ENCODE measurements at regions of chr5 and their contacts with region 1.

Region 1: DNA sequence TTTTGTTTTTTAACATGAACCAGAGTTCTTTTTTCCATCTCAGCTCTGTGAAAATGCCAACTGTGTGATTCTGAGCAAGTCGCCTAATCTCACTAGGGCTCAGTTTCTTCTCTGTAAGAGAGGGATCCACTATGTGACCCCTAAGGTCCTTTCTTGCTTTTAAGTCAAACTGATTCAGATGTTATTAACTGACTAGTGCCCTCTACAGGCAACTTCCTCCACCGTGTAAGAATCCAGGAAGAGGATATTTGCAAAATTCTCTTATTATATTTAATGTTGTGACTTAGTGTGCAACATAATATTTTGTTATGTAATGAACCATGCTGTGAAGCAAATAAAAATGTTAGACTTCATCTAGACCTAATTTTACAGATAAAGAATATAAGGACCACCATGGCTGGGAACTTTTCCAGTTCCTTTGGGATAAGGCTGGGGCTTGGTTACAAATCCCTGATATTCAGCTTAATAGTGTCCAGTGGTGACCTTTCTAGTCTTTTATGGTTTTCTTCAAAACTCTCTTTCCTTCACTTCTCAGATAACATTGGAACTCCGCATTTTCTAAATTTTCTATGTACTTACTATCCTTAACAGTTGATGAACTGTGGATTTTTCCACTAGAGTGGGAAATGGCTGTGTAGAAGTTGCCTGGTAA is 244.7 kb downstream of the PIK3R1 start:
- DNase-seq: peak in 8 of 9 experiments; percentile 13 to 81 (median 42)
- ATAC-seq: peak; percentile 55
- H3K4me3 ChIP-seq: no peak overlapping the region
- H3K4me3 Mint-ChIP-seq: no peak overlapping the region
- H3K27ac ChIP-seq: no peak overlapping the region
- H3K27ac Mint-ChIP-seq: peak overlapping the region; percentile 19
- H3K4me1 ChIP-seq: peaks cover 13% of the 10 kb centered on the region
- H3K4me1 Mint-ChIP-seq: peaks cover 18% of the 10 kb centered on the region
- H3K27me3 ChIP-seq: no peaks in the 10 kb centered on the region
- H3K27me3 Mint-ChIP-seq: no peaks in the 10 kb centered on the region
- CTCF ChIP-seq: peak; percentile 80

Region 2: DNA sequence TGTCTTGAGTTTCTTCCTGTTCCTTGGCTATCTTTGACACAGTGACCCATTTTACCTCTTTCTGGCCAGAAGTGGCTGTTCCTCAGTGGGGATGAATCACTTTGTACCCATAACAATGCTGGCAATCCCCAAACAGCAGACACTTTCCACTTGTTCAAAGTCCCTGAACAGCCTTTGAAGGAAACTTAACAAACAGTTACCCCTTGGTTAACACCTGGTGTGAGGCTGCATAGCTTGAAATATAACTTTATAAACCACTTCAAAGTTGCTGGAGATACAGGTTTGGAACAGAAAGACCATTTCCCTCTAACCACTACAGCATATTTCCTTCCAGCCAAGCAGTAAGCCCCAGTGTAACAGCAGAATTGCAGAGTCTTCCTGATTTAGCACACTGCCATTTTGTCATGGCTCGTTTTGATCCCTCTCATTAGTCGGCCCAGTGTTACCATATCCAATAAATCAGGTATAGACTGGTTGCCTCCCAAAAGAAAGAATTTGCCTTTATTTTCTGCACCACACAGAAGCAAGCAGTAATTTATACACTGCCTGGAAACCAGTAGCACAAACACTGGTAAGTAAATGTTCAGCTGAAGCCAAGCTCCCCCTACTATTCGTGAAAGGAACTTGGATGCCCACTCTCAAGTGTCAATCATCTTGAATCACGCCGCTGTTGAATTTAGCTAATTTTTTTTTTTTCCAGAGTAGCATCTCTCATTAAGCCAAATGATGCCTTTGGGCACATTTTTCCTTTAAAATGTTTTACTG is 18.8 kb before region 1 on chr5:
- CTCF ChIA-PET with region 1: interaction called, 4 read pairs
- POLR2A ChIA-PET with region 1: no interaction called
- intact Hi-C with region 1: loop called in 1 of 2 experiments (anchors 2 kb)
- DNase-seq: peak in 3 of 9 experiments; percentile 20 to 65 (median 55)
- ATAC-seq: peak; percentile 73
- H3K4me3 ChIP-seq: no peak overlapping the region
- H3K4me3 Mint-ChIP-seq: no peak overlapping the region
- H3K27ac ChIP-seq: no peak overlapping the region
- H3K27ac Mint-ChIP-seq: no peak overlapping the region
- H3K4me1 ChIP-seq: peaks cover 8% of the 10 kb centered on the region
- H3K4me1 Mint-ChIP-seq: peaks cover 14% of the 10 kb centered on the region
- H3K27me3 ChIP-seq: no peaks in the 10 kb centered on the region
- H3K27me3 Mint-ChIP-seq: no peaks in the 10 kb centered on the region
- CTCF ChIP-seq: no peak

Region 3: DNA sequence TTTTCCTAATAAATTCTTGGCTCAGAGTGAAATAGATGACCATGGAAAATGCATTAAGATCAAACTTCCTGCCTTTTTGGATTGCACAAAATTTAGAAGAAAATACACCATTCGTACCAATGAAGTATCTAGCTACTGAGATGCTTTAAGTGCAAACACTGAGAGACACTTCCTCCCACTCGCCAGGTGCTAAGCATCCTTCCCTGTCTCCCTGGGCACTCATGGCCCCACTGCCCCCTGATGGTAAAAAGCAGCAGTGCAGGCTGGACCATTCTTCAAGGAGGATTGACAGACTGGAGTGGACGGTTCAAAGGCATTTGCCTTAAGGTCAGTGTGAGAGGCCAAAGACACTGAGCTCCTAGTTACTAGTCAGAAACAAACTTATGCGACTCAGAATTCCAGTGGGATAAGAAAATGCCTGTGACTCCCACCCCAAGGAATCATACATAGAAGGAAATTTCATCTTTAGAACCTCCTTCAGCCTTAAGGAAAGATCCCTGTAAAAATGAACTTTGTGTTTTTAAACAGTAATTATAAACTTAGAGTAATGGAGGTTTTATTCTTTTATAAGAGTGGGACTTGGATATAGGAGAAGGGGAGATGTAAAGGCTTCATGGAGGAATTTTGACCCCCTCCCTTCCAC is 547.6 kb after region 1 on chr5:
- CTCF ChIA-PET with region 1: no interaction called
- POLR2A ChIA-PET with region 1: no interaction called
- intact Hi-C with region 1: loop called in 1 of 2 experiments (anchors 5 kb)
- DNase-seq: peak; percentile 44 to 83 (median 69)
- ATAC-seq: peak; percentile 94
- H3K4me3 ChIP-seq: no peak overlapping the region
- H3K4me3 Mint-ChIP-seq: no peak overlapping the region
- H3K27ac ChIP-seq: no peak overlapping the region
- H3K27ac Mint-ChIP-seq: no peak overlapping the region
- H3K4me1 ChIP-seq: no peaks in the 10 kb centered on the region
- H3K4me1 Mint-ChIP-seq: no peaks in the 10 kb centered on the region
- H3K27me3 ChIP-seq: no peaks in the 10 kb centered on the region
- H3K27me3 Mint-ChIP-seq: peaks cover 4% of the 10 kb centered on the region
- CTCF ChIP-seq: peak; percentile 82